OCI-LY7 (cell line): ENCODE measurements at regions of chr18 and their contacts with region 1.

Region 1: DNA sequence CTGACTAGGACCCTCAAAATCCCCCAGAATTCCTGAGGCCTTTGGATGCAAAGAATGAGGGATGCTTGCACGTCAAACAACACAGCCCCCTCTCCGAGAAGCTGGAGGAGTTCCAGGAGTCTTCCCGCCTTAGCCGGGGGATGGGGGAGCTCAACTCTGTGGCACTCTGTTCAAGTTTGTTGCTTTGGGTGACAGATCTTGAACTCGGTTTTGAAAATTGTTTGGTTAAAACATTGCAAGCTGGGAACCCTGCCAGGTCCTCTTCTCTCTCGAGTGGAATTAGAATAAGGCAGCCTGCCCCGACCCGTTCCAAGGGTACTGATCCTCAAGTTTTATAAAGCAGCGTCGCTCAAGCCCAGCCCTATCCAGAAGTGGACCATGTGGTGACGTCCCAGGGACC is 244.1 kb downstream of the LOXHD1 start:
- DNase-seq: no peak
- H3K4me3 ChIP-seq: no peak overlapping the region
- H3K27ac ChIP-seq: no peak overlapping the region
- H3K4me1 ChIP-seq: no peaks in the 10 kb centered on the region
- CTCF ChIP-seq: no peak

Region 2: GRCh38 chr18:46369323-46369722 is 43.6 kb before region 1 on chr18:
- CTCF ChIA-PET with region 1: no interaction called
- POLR2A ChIA-PET with region 1: no interaction called
- intact Hi-C with region 1: no loop called
- DNase-seq: no peak
- H3K4me3 ChIP-seq: no peak overlapping the region
- H3K27ac ChIP-seq: no peak overlapping the region
- H3K4me1 ChIP-seq: no peaks in the 10 kb centered on the region
- CTCF ChIP-seq: no peak

Region 3: GRCh38 chr18:47331026-47331425 is 918.1 kb after region 1 on chr18:
- CTCF ChIA-PET with region 1: interaction called, 10 read pairs
- POLR2A ChIA-PET with region 1: no interaction called
- intact Hi-C with region 1: no loop called
- DNase-seq: no peak
- H3K4me3 ChIP-seq: no peak overlapping the region
- H3K27ac ChIP-seq: no peak overlapping the region
- H3K4me1 ChIP-seq: no peaks in the 10 kb centered on the region
- CTCF ChIP-seq: no peak